Dendritic cell treated with granulocyte-macrophage colony-stimulating factor and Interleukin-4, amounts not matched to agents 40 ng/mL and 50 ng/mL, for 4 days (primary cell): ENCODE measurements at regions of chr17 and their contacts with region 1.

Region 1: DNA sequence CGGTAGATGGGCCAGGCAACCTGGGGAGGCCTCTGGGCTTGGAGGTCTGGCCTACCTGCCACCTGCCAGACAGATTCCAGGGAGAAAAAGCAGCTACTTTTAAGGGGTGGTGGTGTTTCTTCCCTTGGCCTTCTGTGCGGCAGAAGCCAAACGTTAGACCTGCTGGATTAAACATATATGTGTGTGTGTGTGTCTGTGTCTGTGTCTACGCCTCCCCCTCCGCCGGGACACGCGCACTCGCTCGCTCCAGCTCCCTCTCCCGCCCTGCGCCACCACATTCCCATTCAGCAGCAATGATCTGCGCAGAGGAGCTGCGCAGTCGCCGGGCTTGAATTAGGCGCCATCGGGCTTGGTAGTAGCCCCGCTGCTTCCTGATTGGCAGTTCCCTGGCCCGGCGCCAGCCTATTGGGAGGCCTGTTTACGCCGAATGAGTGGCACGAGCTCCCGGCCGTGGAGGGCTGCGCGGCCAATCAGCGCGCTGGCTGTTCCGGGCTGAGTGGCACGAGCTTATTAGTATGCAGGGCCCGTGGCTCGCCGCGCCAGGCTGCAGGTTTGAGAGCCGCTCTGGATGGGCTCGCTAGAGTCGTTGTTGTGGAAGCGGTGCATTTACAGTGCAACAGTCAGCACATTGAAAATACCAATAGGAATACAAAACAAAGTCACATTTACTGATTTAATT is at the start of gene BAHCC1:
- H3K4me3 Mint-ChIP-seq: peak within 1 kb of the TSS; percentile 95
- H3K27ac Mint-ChIP-seq: peak within 1 kb of the TSS; percentile 97
- H3K4me1 Mint-ChIP-seq: peaks cover 48% of the 10 kb centered on the region
- H3K27me3 Mint-ChIP-seq: no peaks in the 10 kb centered on the region

Region 2: DNA sequence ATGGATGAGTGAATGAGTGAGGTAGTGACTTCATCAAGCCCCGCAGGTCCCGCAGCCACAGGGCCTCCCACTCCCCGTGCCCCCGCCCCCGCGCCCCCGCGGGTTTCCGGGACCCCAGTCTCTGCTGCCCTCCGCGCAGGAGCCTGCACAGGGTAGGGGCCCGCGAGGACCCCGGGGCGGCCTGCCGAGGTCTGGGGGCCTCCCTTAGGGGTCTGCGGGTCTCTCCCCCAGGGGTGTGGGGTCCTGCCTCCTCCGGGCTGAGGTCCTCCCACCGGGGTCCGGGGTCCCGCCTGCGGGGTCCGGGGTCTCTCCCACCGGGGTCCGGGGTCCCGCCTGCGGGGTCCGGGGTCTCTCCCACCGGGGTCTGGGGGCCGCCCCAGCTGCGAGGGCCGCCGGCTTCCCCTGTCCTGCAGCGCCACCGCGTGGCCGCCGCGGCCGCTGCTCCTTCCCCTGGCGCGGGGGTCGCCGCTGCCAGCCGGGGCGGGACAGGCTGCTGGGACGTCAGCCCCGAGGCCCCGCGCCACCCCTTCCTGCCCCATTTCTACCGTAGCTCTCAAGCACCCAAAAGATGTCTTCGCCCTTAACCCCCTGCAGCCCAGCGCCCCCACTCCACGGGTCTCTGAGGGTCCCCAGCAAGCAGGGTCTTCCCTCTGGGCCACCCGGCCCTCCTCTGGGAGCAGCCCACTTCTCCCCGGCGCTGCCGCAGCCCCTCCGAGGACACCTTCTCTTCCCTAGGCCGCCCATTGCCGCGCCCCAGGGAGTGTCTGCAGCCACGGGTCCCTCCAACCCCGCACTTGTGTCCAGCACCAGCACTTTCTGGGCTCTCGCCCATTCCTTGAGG is 413.8 kb before region 1 on chr17:
- intact Hi-C with region 1: no loop called
- H3K4me3 Mint-ChIP-seq: no peak overlapping the region
- H3K27ac Mint-ChIP-seq: peak overlapping the region; percentile 18
- H3K4me1 Mint-ChIP-seq: peaks cover 26% of the 10 kb centered on the region
- H3K27me3 Mint-ChIP-seq: peaks cover 41% of the 10 kb centered on the region

Region 3: GRCh38 chr17:81294856-81295680 is 100.0 kb before region 1 on chr17 and contains the start of gene SLC38A10:
- intact Hi-C with region 1: loop called (anchors 10 kb)
- H3K4me3 Mint-ChIP-seq: peak within 1 kb of the TSS; percentile 92
- H3K27ac Mint-ChIP-seq: peak within 1 kb of the TSS; percentile 96
- H3K4me1 Mint-ChIP-seq: peaks cover 50% of the 10 kb centered on the region
- H3K27me3 Mint-ChIP-seq: peaks cover 3% of the 10 kb centered on the region

Region 4: GRCh38 chr17:81346090-81346907 is 48.8 kb before region 1 on chr17:
- intact Hi-C with region 1: loop called (anchors 2 kb)
- H3K4me3 Mint-ChIP-seq: peak overlapping the region; percentile 83
- H3K27ac Mint-ChIP-seq: peak overlapping the region; percentile 82
- H3K4me1 Mint-ChIP-seq: peaks cover 71% of the 10 kb centered on the region
- H3K27me3 Mint-ChIP-seq: peaks cover 33% of the 10 kb centered on the region

Region 5: GRCh38 chr17:81440876-81441244 is 45.8 kb after region 1 on chr17:
- intact Hi-C with region 1: no loop called
- H3K4me3 Mint-ChIP-seq: no peak overlapping the region
- H3K27ac Mint-ChIP-seq: no peak overlapping the region
- H3K4me1 Mint-ChIP-seq: peaks cover 13% of the 10 kb centered on the region
- H3K27me3 Mint-ChIP-seq: peaks cover 4% of the 10 kb centered on the region

Region 6: DNA sequence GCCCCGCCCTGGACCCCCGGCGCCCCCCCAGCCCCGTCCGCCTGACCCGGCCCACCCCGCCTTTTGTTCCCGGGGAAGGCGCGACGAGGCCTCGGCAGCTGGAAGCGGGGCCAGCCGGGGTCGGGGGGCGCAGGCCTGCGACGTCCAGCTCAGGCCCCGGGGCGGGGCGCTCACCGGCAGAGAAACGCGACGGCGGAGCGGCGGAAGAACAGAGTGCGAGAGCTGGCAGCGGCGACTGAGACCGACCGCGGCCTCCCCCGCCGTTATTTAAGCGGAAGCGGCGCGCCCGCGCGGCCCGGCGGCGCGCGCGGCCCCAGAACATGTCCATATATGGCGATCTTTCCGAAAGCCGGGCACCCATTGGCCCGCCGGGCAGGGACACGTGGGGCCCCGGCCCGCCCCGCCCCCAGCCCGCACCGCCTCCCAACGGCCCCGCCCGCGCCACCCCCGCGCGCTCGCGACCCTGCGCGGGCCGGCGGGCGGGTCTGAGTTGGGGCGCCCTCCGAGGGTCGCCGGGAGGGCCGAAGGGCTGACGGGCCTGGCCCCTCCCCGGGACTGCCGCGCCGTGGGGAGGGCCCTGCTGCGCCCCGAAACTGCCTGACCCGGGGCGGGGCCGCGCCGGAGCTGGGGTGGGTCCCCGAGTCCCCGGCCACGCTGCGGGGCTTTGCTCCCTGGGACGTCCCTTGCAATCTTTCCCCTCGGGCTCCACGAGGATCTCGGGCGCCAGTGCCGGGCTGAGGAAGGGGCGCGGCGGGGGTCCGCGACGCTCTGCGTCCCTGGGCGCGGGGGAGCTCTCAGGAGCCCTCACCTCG is 117.7 kb after region 1 on chr17 and contains the start of gene ACTG1:
- intact Hi-C with region 1: loop called (anchors 10 kb)
- H3K4me3 Mint-ChIP-seq: peak within 1 kb of the TSS; percentile 99
- H3K27ac Mint-ChIP-seq: peak within 1 kb of the TSS; percentile 88
- H3K4me1 Mint-ChIP-seq: peaks cover 69% of the 10 kb centered on the region
- H3K27me3 Mint-ChIP-seq: no peaks in the 10 kb centered on the region